ENCODE measurements at regions of chr7 and their contacts with region 1.

Region 1: DNA sequence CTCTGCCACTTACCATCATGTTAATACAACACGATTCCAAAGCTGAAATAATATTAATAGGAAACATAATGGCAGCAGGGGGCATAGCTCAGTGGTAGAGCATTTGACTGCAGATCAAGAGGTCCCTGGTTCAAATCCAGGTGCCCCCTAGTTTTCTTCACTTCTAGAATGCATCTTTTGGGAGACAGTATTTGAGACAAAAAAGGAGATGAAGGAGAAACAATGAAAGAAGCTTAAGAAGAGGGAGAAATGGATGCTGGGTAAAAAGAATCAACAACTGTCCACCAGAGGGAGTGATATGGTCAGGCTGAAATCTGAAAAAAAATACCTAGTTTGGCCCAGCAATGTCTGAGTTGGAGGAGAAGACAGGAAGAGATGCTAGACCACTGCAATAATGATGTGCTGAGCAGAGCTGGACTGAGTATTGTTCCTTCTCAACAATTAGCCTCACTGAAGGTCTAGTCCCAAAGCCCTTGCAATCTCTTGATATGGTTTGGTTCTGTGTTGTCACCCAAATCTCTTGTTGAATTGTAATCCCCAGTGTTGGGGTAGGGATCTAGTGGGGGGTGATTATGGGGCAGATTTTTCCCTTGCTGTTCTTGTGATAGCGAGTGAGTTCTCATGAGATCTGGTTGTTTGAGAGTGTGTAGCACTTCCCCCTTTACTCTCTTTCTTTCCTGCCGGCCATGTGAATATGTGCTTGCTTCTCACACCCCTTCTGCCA is 48.3 kb downstream of the ZNF783 start:
- DNase-seq: peak; percentile 53
- ATAC-seq: peak; percentile 73
- H3K4me3 ChIP-seq: no peak overlapping the region
- H3K27ac ChIP-seq: no peak overlapping the region
- H3K4me1 ChIP-seq: no peaks in the 10 kb centered on the region
- H3K27me3 ChIP-seq: peaks cover 0 to 5% of the 10 kb centered on the region in 2 experiments; a peak in 1 of 5 replicates
- CTCF ChIP-seq: peak; percentile 64
- EP300 ChIP-seq: no peak
- POLR2A ChIP-seq: no peak
- RAD21 ChIP-seq: peak; percentile 55

Region 2: GRCh38 chr7:149409895-149410294 is 99.6 kb after region 1 on chr7:
- CTCF ChIA-PET with region 1: no interaction called
- POLR2A ChIA-PET with region 1: no interaction called
- in situ Hi-C with region 1: no loop called
- intact Hi-C with region 1: loop called (anchors 5 kb)
- DNase-seq: no peak
- ATAC-seq: peak; percentile 42; the same call in 2 of the 3 replicates
- H3K4me3 ChIP-seq: no peak overlapping the region
- H3K27ac ChIP-seq: no peak overlapping the region
- H3K4me1 ChIP-seq: peaks cover 28% of the 10 kb centered on the region; the same call in 1 of the 2 replicates
- H3K27me3 ChIP-seq: peaks cover 0 to 5% of the 10 kb centered on the region in 2 experiments; a peak in 2 of 5 replicates
- CTCF ChIP-seq: no peak
- EP300 ChIP-seq: no peak
- POLR2A ChIP-seq: no peak
- RAD21 ChIP-seq: no peak

Region 3: GRCh38 chr7:149422129-149422913 is 112.0 kb after region 1 on chr7:
- CTCF ChIA-PET with region 1: interaction called, 15 read pairs
- POLR2A ChIA-PET with region 1: no interaction called
- in situ Hi-C with region 1: no loop called
- intact Hi-C with region 1: no loop called
- DNase-seq: peak; percentile 44
- ATAC-seq: peak; percentile 91
- H3K4me3 ChIP-seq: peak overlapping the region; percentile 50 to 63 (median 50); a peak in 5 of 6 replicates
- H3K27ac ChIP-seq: peak overlapping the region; percentile 49
- H3K4me1 ChIP-seq: peaks cover 15% of the 10 kb centered on the region
- H3K27me3 ChIP-seq: no peaks in the 10 kb centered on the region; a peak in 1 of 5 replicates
- CTCF ChIP-seq: peak; percentile 59; the same call in 1 of the 2 replicates
- EP300 ChIP-seq: peak in 1 of 2 experiments; percentile 17; a peak in 1 of 4 replicates
- POLR2A ChIP-seq: peak; percentile 35 to 54; a peak in 2 of 4 replicates
- RAD21 ChIP-seq: peak; percentile 83

Region 4: GRCh38 chr7:149468215-149468614 is 157.9 kb after region 1 on chr7:
- CTCF ChIA-PET with region 1: interaction called, 4 read pairs
- POLR2A ChIA-PET with region 1: no interaction called
- in situ Hi-C with region 1: no loop called
- intact Hi-C with region 1: loop called (anchors 1 kb)
- DNase-seq: no peak
- ATAC-seq: peak; percentile 86
- H3K4me3 ChIP-seq: no peak overlapping the region
- H3K27ac ChIP-seq: no peak overlapping the region
- H3K4me1 ChIP-seq: no peaks in the 10 kb centered on the region
- H3K27me3 ChIP-seq: no peaks in the 10 kb centered on the region
- CTCF ChIP-seq: peak; percentile 41
- EP300 ChIP-seq: no peak
- POLR2A ChIP-seq: no peak
- RAD21 ChIP-seq: no peak

Region 5: GRCh38 chr7:149497456-149498261 is 187.4 kb after region 1 on chr7 and contains the start of gene ZNF746:
- CTCF ChIA-PET with region 1: no interaction called
- POLR2A ChIA-PET with region 1: no interaction called
- in situ Hi-C with region 1: no loop called
- intact Hi-C with region 1: loop called (anchors 1 kb)
- DNase-seq: peak; percentile 67
- ATAC-seq: peak; percentile 85
- H3K4me3 ChIP-seq: peak within 1 kb of the TSS; percentile 68 to 85 (median 77)
- H3K27ac ChIP-seq: peak within 1 kb of the TSS; percentile 55
- H3K4me1 ChIP-seq: peaks cover 18% of the 10 kb centered on the region
- H3K27me3 ChIP-seq: peaks cover 2 to 39% of the 10 kb centered on the region in 2 experiments; a peak in 4 of 5 replicates
- CTCF ChIP-seq: peak; percentile 76
- EP300 ChIP-seq: no peak
- POLR2A ChIP-seq: peak in 1 of 2 experiments; percentile 47; a peak in 2 of 4 replicates
- RAD21 ChIP-seq: peak; percentile 88
- total RNA-seq, gene ZNF746: 8.0 and 8.1 TPM in 2 replicates